ENCODE measurements at regions of chr11 and their contacts with region 1.

Region 1: GRCh38 chr11:125592305-125593112 is at the start of gene STT3A:
- DNase-seq: peak; percentile 99
- ATAC-seq: peak; percentile 94
- H3K4me3 Mint-ChIP-seq: peak within 1 kb of the TSS; percentile 100
- H3K27ac Mint-ChIP-seq: peak within 1 kb of the TSS; percentile 99
- H3K4me1 Mint-ChIP-seq: peaks cover 31% of the 10 kb centered on the region
- H3K27me3 Mint-ChIP-seq: no peaks in the 10 kb centered on the region
- CTCF ChIP-seq: no peak
- total RNA-seq, gene STT3A: 111 to 114 TPM

Region 2: GRCh38 chr11:125625630-125626287 is 33.2 kb after region 1 on chr11:
- CTCF ChIA-PET with region 1: interaction called, 4 read pairs
- POLR2A ChIA-PET with region 1: interaction called, 43 read pairs
- intact Hi-C with region 1: loop called (anchors 2 kb)
- DNase-seq: peak; percentile 90
- ATAC-seq: peak; percentile 88
- H3K4me3 Mint-ChIP-seq: peak overlapping the region; percentile 93
- H3K27ac Mint-ChIP-seq: peak overlapping the region; percentile 97
- H3K4me1 Mint-ChIP-seq: peaks cover 22% of the 10 kb centered on the region
- H3K27me3 Mint-ChIP-seq: no peaks in the 10 kb centered on the region
- CTCF ChIP-seq: no peak